Activated B cell treated with CpG ODN at 0.5 μM for 24 hours (primary cell): ENCODE measurements at regions of chr10 and their contacts with region 1.

Region 1: DNA sequence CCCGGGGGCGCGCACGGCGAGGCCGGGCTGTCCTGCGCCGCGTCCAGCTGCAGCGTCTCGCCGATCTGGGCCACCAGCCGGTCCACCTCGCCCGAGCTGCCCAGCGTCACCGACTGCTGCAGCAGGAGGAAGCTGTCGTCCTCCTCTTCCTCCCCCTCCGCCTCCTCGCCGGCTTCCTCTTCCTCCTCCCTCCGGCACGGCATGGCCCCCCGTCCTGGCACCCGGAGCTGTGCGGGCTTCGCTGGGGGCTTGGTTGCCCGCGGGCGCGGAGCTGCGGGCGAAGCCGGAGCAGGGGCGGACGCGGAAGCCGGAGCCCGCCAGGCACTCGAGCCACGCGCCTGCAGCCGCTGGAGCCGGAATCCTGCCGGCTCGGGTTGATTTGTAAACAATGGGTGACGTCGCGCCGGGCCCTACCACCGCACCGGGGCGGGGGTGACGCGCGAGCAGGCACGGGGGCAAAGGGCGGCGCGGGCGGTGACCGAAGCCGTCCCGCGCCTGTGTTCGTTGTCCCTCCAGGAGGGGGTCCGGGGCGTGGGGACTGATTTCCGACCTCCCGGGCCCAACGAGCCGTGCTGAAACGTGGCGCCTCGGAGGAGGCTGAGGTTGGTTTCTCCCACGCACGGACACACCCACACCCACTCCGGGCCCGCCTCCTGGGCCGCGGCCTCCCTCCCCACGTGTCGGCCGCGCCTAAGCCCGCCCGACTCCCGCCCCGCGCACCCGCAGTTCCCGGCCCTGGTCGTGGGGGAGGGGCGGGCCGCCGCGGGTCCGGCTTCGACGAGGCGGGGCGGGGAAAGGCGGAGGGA is at the start of gene FRAT2:
- DNase-seq: peak; percentile 90
- ATAC-seq: peak; percentile 91
- H3K4me3 Mint-ChIP-seq: peak within 1 kb of the TSS; percentile 87
- H3K27ac Mint-ChIP-seq: peak within 1 kb of the TSS; percentile 92
- H3K4me1 Mint-ChIP-seq: peaks cover 46% of the 10 kb centered on the region
- H3K27me3 Mint-ChIP-seq: no peaks in the 10 kb centered on the region
- CTCF ChIP-seq: no peak
- total RNA-seq, gene FRAT2: 9.7 and 10.9 TPM in 2 replicates

Region 2: GRCh38 chr10:97196223-97197029 is 138.1 kb before region 1 on chr10:
- CTCF ChIA-PET with region 1: no interaction called
- POLR2A ChIA-PET with region 1: no interaction called
- intact Hi-C with region 1: loop called (anchors 5 kb)
- DNase-seq: peak; percentile 45
- ATAC-seq: peak; percentile 75
- H3K4me3 Mint-ChIP-seq: peak overlapping the region; percentile 82
- H3K27ac Mint-ChIP-seq: no peak overlapping the region
- H3K4me1 Mint-ChIP-seq: peaks cover 33% of the 10 kb centered on the region
- H3K27me3 Mint-ChIP-seq: peaks cover 27% of the 10 kb centered on the region
- CTCF ChIP-seq: peak; percentile 65

Region 3: GRCh38 chr10:97318772-97319651 is 15.6 kb before region 1 on chr10 and contains the start of gene FRAT1:
- CTCF ChIA-PET with region 1: interaction called, 9 read pairs
- POLR2A ChIA-PET with region 1: interaction called, 41 read pairs
- intact Hi-C with region 1: loop called (anchors 1 kb)
- DNase-seq: peak; percentile 91
- ATAC-seq: peak; percentile 66
- H3K4me3 Mint-ChIP-seq: peak within 1 kb of the TSS; percentile 92
- H3K27ac Mint-ChIP-seq: peak within 1 kb of the TSS; percentile 100
- H3K4me1 Mint-ChIP-seq: peaks cover 30% of the 10 kb centered on the region
- H3K27me3 Mint-ChIP-seq: no peaks in the 10 kb centered on the region
- CTCF ChIP-seq: no peak
- total RNA-seq, gene FRAT1: 6.9 TPM in 2 replicates

Region 4: GRCh38 chr10:97365761-97366351 is 31.3 kb after region 1 on chr10:
- CTCF ChIA-PET with region 1: no interaction called
- POLR2A ChIA-PET with region 1: interaction called, 6 read pairs
- intact Hi-C with region 1: loop called (anchors 5 kb)
- DNase-seq: no peak
- ATAC-seq: peak; percentile 85
- H3K4me3 Mint-ChIP-seq: peak overlapping the region; percentile 56
- H3K27ac Mint-ChIP-seq: peak overlapping the region; percentile 90
- H3K4me1 Mint-ChIP-seq: peaks cover 36% of the 10 kb centered on the region
- H3K27me3 Mint-ChIP-seq: no peaks in the 10 kb centered on the region
- CTCF ChIP-seq: no peak

Region 5: GRCh38 chr10:97445722-97446639 is 111.4 kb after region 1 on chr10 and contains the starts of genes EXOSC1 and ZDHHC16:
- CTCF ChIA-PET with region 1: no interaction called
- POLR2A ChIA-PET with region 1: no interaction called
- intact Hi-C with region 1: loop called (anchors 1 kb)
- DNase-seq: peak; percentile 80
- ATAC-seq: peak; percentile 98
- H3K4me3 Mint-ChIP-seq: peak within 1 kb of the TSS; percentile 99
- H3K27ac Mint-ChIP-seq: peak within 1 kb of the TSS; percentile 93
- H3K4me1 Mint-ChIP-seq: peaks cover 43% of the 10 kb centered on the region
- H3K27me3 Mint-ChIP-seq: no peaks in the 10 kb centered on the region
- CTCF ChIP-seq: no peak
- total RNA-seq, gene EXOSC1: 47.4 and 53.8 TPM in 2 replicates
- total RNA-seq, gene ZDHHC16: 39.0 and 40.6 TPM in 2 replicates

Region 6: GRCh38 chr10:97553575-97554031 is 219.0 kb after region 1 on chr10:
- CTCF ChIA-PET with region 1: no interaction called
- POLR2A ChIA-PET with region 1: no interaction called
- intact Hi-C with region 1: no loop called
- DNase-seq: peak; percentile 35
- ATAC-seq: peak; percentile 90
- H3K4me3 Mint-ChIP-seq: no peak overlapping the region
- H3K27ac Mint-ChIP-seq: no peak overlapping the region
- H3K4me1 Mint-ChIP-seq: no peaks in the 10 kb centered on the region
- H3K27me3 Mint-ChIP-seq: no peaks in the 10 kb centered on the region
- CTCF ChIP-seq: no peak